ENCODE measurements at regions of chr1 and their contacts with region 1.

Region 1: GRCh38 chr1:89908672-89909436 is 86.1 kb upstream of the ZNF326 start:
- DNase-seq: peak; percentile 66
- H3K4me3 Mint-ChIP-seq: no peak overlapping the region
- H3K27ac Mint-ChIP-seq: peak overlapping the region; percentile 85
- H3K4me1 Mint-ChIP-seq: peaks cover 41% of the 10 kb centered on the region
- H3K27me3 Mint-ChIP-seq: no peaks in the 10 kb centered on the region
- CTCF ChIP-seq: no peak

Region 2: GRCh38 chr1:89890085-89890752 is 18.6 kb before region 1 on chr1:
- CTCF ChIA-PET with region 1: interaction called, 3 read pairs
- POLR2A ChIA-PET with region 1: interaction called, 16 read pairs
- intact Hi-C with region 1: loop called (anchors 2 kb)
- DNase-seq: peak; percentile 99
- H3K4me3 Mint-ChIP-seq: peak overlapping the region; percentile 70
- H3K27ac Mint-ChIP-seq: peak overlapping the region; percentile 87
- H3K4me1 Mint-ChIP-seq: peaks cover 63% of the 10 kb centered on the region
- H3K27me3 Mint-ChIP-seq: no peaks in the 10 kb centered on the region
- CTCF ChIP-seq: no peak

Region 3: GRCh38 chr1:89942825-89943688 is 34.2 kb after region 1 on chr1:
- CTCF ChIA-PET with region 1: interaction called, 3 read pairs
- POLR2A ChIA-PET with region 1: interaction called, 11 read pairs
- intact Hi-C with region 1: no loop called
- DNase-seq: peak; percentile 84
- H3K4me3 Mint-ChIP-seq: no peak overlapping the region
- H3K27ac Mint-ChIP-seq: peak overlapping the region; percentile 26
- H3K4me1 Mint-ChIP-seq: peaks cover 20% of the 10 kb centered on the region
- H3K27me3 Mint-ChIP-seq: no peaks in the 10 kb centered on the region
- CTCF ChIP-seq: no peak

Region 4: DNA sequence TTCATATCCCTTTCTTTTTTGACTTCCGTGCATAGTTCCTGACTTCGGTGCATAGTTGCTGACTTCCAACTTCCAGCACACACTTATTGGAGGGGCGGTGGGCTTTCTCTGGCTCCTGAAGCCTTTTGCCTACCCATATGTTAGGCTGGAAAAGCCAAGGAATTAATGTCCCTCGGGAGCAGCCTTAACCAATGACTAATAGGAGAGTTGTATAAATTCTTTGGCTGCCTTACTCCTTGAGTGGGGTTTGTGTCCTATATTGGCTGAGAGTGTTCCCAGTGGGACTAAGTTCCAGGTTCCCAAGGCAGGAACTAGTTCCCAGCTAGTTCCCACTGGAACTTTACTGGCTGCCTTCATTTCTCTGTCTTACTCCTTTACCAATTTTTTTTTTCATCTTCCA is 191.7 kb after region 1 on chr1:
- CTCF ChIA-PET with region 1: no interaction called
- POLR2A ChIA-PET with region 1: no interaction called
- intact Hi-C with region 1: no loop called
- DNase-seq: no peak
- H3K4me3 Mint-ChIP-seq: no peak overlapping the region
- H3K27ac Mint-ChIP-seq: no peak overlapping the region
- H3K4me1 Mint-ChIP-seq: no peaks in the 10 kb centered on the region
- H3K27me3 Mint-ChIP-seq: peaks cover 15% of the 10 kb centered on the region
- CTCF ChIP-seq: no peak

Region 5: DNA sequence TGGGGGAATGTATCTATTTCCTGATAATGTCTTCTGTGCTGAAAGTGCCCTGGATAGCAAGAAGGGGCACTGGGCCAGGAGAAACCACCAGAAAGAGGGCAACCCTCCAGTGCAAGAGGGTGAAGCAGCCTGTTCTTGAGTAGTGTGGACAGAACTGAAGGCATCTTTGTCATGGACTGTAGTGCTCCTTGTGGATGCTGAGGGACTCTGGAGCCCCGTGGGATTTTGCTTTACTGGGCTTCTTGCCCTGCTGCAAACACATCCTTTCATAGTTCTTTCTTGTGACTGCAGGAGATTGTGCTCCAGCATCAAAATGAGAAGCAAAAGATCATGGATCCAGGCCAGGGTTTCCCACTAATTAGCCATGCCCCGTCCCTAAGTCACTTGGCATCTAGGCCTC is 386.7 kb after region 1 on chr1:
- CTCF ChIA-PET with region 1: no interaction called
- POLR2A ChIA-PET with region 1: no interaction called
- intact Hi-C with region 1: no loop called
- DNase-seq: no peak
- H3K4me3 Mint-ChIP-seq: no peak overlapping the region
- H3K27ac Mint-ChIP-seq: no peak overlapping the region
- H3K4me1 Mint-ChIP-seq: no peaks in the 10 kb centered on the region
- H3K27me3 Mint-ChIP-seq: peaks cover 32% of the 10 kb centered on the region
- CTCF ChIP-seq: no peak

Measured in MCF 10A (cell line).